ENCODE measurements at regions of chr2 and their contacts with region 1.

Region 1: DNA sequence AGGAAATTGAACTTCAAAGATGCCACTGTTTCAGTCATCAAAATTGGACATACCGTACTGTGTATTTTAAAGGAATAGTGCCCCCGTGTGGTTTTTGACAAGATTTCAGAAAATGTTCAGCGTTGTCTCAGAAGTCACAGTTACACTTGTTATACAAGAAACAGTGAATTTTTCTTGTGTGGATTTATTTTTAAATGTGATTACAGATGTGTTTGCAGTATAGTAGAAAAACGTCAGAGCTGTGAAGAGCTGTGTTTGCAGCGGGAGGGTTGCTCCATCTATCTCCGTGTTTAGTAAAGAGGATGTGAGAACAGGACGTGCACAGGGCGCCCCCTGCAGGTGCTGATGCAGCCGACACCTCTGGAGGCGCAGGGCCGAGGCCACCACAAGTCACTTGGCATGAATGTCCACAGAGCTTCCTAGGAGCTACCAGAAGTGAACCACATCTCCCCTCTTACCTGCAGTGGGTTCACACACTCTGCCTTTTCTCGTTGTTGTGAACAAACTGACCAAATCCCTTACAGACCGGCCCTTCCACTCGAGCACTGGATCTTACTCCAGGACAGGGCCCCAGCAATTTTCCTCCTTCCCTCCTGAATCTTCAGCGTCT is 73.1 kb downstream of the CACNB4 start:
- DNase-seq: peak; percentile 88
- ATAC-seq: peak; percentile 89 to 94

Region 2: GRCh38 chr2:150742094-150742493 is 1283.7 kb before region 1 on chr2:
- intact Hi-C with region 1: no loop called
- DNase-seq: no peak
- ATAC-seq: no peak

Region 3: DNA sequence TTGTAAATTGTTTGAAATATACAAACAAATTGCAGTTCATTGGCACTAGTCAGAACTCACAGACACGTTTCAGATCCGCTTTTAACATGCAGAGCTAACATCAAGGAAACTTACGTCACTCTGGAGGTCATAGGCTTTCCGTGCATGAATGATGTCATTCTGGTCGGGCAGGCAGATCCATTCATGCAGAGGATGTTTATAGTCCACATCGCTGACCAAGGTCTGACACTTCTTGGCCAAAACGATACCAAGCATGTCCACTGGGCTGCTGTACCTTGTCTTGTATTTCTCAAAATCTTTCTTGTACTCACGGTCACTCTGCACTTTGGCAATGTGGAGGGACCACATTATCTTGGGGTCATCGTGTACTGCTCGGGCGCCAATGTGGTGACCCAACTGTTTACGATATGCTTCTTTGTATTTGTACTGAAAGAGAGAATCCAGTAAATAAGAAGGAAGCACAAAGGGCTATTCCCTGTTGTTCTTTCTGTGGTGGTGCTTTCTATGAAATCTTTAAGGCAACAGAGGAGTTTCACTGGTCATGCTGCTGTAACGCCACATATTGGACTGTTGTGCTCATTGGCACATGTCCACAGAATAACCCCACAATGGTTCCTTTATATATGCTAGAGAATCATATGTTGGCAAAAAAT is 406.3 kb before region 1 on chr2:
- intact Hi-C with region 1: loop called in 1 of 2 experiments (anchors 10 kb)
- DNase-seq: peak; percentile 24
- ATAC-seq: no peak

Region 4: GRCh38 chr2:151900331-151900730 is 125.5 kb before region 1 on chr2:
- intact Hi-C with region 1: no loop called
- DNase-seq: no peak
- ATAC-seq: no peak

Region 5: GRCh38 chr2:152720361-152720760 is 694.6 kb after region 1 on chr2:
- intact Hi-C with region 1: no loop called
- DNase-seq: no peak
- ATAC-seq: no peak